MCF 10A (cell line): ENCODE measurements at regions of chr14 and their contacts with region 1.

Region 1: GRCh38 chr14:23320774-23321571 is at the start of gene PABPN1:
- DNase-seq: peak; percentile 100
- H3K4me3 Mint-ChIP-seq: peak within 1 kb of the TSS; percentile 84
- H3K27ac Mint-ChIP-seq: peak within 1 kb of the TSS; percentile 97
- H3K4me1 Mint-ChIP-seq: peaks cover 11% of the 10 kb centered on the region
- H3K27me3 Mint-ChIP-seq: no peaks in the 10 kb centered on the region
- CTCF ChIP-seq: no peak
- total RNA-seq, gene PABPN1: 153 and 167 TPM in 2 replicates

Region 2: GRCh38 chr14:23258256-23258655 is 62.7 kb before region 1 on chr14:
- CTCF ChIA-PET with region 1: no interaction called
- POLR2A ChIA-PET with region 1: no interaction called
- intact Hi-C with region 1: no loop called
- DNase-seq: no peak
- H3K4me3 Mint-ChIP-seq: no peak overlapping the region
- H3K27ac Mint-ChIP-seq: no peak overlapping the region
- H3K4me1 Mint-ChIP-seq: no peaks in the 10 kb centered on the region
- H3K27me3 Mint-ChIP-seq: peaks cover 9% of the 10 kb centered on the region
- CTCF ChIP-seq: no peak

Region 3: DNA sequence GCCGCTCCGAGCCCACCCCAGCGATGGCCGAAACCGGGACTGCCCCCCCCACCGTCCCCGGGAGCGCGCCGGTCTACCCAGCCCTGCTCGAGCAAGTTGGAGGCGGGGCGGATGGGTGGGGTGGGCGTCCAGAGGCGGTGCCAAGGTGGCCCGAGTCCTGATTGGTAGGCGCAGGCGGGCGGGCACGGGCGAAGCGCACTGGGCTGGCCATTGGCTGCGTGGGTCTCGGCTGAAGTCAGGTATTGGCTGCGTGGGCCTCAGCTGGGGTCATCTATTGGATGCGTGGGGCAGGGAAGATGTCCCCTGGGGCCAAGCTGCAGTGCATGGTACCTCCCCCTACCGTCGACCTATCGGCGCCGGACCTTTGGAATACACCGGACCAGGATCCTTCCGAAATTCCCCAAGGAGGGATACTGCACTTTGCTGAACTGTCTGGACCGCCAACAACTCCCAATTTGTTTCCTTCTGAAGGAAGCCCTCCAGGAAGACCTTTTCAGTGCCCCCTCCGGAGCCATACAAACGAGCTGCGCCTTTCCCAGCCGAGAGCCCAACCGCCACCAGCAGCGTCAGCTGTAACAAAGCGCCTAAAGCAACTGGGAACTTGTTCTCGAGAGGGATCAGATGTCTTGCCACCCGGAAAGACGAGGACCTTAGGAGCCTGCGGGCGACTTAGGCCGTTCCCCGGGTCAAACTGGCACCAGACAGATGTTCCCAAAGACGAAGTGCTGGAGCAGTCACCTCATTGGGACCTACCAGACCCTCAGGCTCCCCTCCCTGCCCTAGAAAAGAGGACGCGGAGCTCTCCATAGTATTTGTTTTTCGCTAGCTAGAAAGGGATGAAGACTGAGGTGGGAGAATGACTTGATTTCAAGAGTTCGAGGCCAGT is 34.7 kb before region 1 on chr14 and contains the start of gene HOMEZ:
- CTCF ChIA-PET with region 1: interaction called, 5 read pairs
- POLR2A ChIA-PET with region 1: interaction called, 52 read pairs
- intact Hi-C with region 1: no loop called
- DNase-seq: peak; percentile 98
- H3K4me3 Mint-ChIP-seq: peak within 1 kb of the TSS; percentile 97
- H3K27ac Mint-ChIP-seq: peak within 1 kb of the TSS; percentile 75
- H3K4me1 Mint-ChIP-seq: peaks cover 8% of the 10 kb centered on the region
- H3K27me3 Mint-ChIP-seq: no peaks in the 10 kb centered on the region
- CTCF ChIP-seq: no peak
- total RNA-seq, gene HOMEZ: 6.6 and 9.3 TPM in 2 replicates

Region 4: DNA sequence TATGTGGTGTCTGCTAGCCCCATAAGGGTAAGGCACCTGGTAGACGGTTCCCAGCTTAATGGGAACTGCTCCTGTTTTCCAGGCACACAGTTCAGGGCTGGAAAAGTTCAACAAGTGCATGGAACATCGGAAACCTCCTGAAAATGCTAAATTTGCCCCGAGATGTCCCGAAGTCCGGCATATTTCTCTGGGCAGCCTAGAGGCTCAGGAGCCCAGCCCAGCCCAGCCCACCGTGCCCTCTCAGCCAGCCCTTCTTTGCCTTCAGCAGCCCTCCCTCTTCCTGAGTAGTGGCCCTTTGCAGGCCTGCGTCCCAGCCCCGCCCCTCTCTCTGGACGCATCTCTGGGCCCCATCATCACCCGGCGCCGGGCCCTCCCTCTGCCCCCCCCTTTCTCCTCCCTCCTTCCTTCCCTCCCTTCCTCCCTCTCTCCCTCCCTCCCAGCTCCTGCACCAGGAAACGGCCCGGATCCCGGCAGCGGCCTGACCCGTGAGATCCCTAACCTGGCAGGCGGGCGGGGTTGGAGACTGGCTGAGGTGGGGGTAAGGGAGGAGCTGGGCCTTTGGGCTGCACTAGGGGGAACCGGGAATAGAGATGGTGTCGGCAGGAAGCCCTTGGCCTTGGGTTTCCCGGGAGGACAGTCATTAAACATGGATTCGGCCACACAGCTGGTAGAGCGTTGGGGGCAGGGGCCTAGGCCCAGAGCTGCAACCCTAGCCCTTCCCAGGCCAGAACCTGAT is 14.4 kb before region 1 on chr14 and contains the start of gene BCL2L2:
- CTCF ChIA-PET with region 1: interaction called, 49 read pairs
- POLR2A ChIA-PET with region 1: interaction called, 339 read pairs
- intact Hi-C with region 1: loop called (anchors 1 kb)
- DNase-seq: peak; percentile 92
- H3K4me3 Mint-ChIP-seq: peak within 1 kb of the TSS; percentile 98
- H3K27ac Mint-ChIP-seq: peak within 1 kb of the TSS; percentile 88
- H3K4me1 Mint-ChIP-seq: peaks cover 26% of the 10 kb centered on the region
- H3K27me3 Mint-ChIP-seq: no peaks in the 10 kb centered on the region
- CTCF ChIP-seq: no peak
- total RNA-seq, gene BCL2L2: 41.2 and 42.5 TPM in 2 replicates

Region 5: DNA sequence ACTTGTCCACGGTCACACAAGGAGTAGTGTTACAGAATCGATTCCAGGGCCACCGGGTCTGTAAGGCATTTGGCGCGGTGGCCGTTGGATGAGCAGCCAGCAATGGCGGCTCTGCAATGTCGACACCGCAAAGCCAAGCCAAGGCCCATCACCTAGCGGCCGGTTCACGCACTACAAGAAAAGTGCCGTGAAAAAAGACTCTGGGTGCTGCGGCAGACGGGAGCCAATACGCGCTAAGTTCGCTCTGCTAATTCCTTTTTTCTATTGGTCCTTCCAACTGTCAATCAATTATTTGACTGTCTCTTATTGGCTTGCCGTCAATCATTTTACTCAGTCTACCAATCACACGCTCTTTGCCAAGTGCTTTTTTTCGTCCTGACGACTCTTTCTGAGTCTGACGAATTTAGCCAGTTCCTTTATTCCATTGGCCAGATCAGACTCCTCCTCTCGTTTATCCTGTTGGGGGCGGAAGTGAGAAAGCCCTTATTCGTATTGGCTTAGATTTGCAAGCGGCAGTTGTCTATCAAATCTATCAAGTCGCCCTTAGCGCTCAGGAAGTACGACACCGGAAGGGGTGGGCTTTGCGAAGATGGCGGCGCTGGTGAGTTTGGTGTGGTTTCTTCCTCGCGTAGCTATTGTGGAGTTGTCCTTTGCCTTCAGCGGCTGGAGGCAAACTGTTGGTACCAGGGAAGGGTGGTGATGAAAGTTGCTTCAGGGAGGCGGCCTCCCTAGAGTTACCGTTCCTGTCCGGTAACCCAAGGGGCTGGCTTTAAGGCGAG is 148.3 kb after region 1 on chr14 and contains the start of gene NGDN:
- CTCF ChIA-PET with region 1: interaction called, 3 read pairs
- POLR2A ChIA-PET with region 1: interaction called, 19 read pairs
- intact Hi-C with region 1: no loop called
- DNase-seq: peak; percentile 100
- H3K4me3 Mint-ChIP-seq: no peak within 1 kb of the TSS
- H3K27ac Mint-ChIP-seq: no peak within 1 kb of the TSS
- H3K4me1 Mint-ChIP-seq: peaks cover 8% of the 10 kb centered on the region
- H3K27me3 Mint-ChIP-seq: no peaks in the 10 kb centered on the region
- CTCF ChIP-seq: peak; percentile 57
- total RNA-seq, gene NGDN: 44.5 and 46.8 TPM in 2 replicates